CD8-positive, alpha-beta memory T cell (primary cell): ENCODE measurements at regions of chr5 and their contacts with region 1.

Region 1: GRCh38 chr5:132410451-132411381 is 41.2 kb downstream of the SLC22A5 start:
- DNase-seq: peak; percentile 78 to 91 (median 85)
- H3K4me3 ChIP-seq: peak overlapping the region; percentile 84
- H3K4me3 Mint-ChIP-seq: peak overlapping the region; percentile 91 to 99 (median 96)
- H3K27ac ChIP-seq: peak overlapping the region; percentile 93
- H3K27ac Mint-ChIP-seq: peak overlapping the region; percentile 96 to 99 (median 98)
- H3K4me1 ChIP-seq: peaks cover 74% of the 10 kb centered on the region
- H3K4me1 Mint-ChIP-seq: peaks cover 70 to 91% (median 75%) of the 10 kb centered on the region in 3 donors
- H3K27me3 ChIP-seq: no peaks in the 10 kb centered on the region
- H3K27me3 Mint-ChIP-seq: no peaks in the 10 kb centered on the region

Region 2: GRCh38 chr5:132386644-132387286 is 24.0 kb before region 1 on chr5:
- CTCF ChIA-PET with region 1: interaction called, 15 read pairs
- POLR2A ChIA-PET with region 1: interaction called, 5 read pairs
- DNase-seq: peak; percentile 60 to 86 (median 72)
- H3K4me3 ChIP-seq: no peak overlapping the region
- H3K4me3 Mint-ChIP-seq: peak overlapping the region in 1 of 7 donors; percentile 56
- H3K27ac ChIP-seq: no peak overlapping the region
- H3K27ac Mint-ChIP-seq: peak overlapping the region in 6 of 8 donors; percentile 7 to 85 (median 53)
- H3K4me1 ChIP-seq: peaks cover 19% of the 10 kb centered on the region
- H3K4me1 Mint-ChIP-seq: peaks cover 20 to 37% (median 23%) of the 10 kb centered on the region in 3 donors
- H3K27me3 ChIP-seq: no peaks in the 10 kb centered on the region
- H3K27me3 Mint-ChIP-seq: no peaks in the 10 kb centered on the region

Region 3: DNA sequence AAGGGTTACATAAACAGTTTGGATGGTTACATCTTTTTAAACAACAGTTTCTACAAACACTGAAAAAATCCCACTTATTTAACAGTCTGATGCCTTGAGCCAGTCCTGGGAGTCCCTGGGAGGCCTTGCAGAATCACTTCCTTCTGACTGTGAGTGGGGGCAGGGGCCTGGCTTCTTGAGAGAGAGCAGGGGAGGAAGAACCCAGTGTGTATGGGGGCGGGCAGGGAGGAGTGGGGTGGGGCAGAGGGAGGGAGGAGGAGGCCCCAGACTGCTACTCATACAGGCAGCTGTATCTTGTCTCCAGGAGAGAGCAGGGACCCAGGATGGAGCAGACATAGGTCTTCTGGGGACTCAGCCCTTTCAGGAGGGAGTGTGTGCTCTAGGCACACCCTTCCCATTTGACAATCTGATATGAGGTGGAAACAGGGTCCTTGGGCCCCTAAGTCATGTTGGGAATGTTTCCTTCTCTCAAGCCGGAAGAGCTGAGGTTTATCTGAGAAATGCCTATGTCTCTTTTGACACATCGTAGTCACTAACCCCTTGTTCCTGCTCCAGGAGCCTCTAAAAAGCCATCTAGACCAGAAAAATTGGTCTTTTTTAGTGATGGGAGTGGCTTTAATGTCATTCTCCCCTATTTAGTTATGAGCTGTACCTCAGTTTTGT is 27.0 kb after region 1 on chr5:
- CTCF ChIA-PET with region 1: interaction called, 13 read pairs
- POLR2A ChIA-PET with region 1: interaction called, 3 read pairs
- DNase-seq: peak; percentile 35 to 82 (median 48)
- H3K4me3 ChIP-seq: peak overlapping the region; percentile 55
- H3K4me3 Mint-ChIP-seq: peak overlapping the region; percentile 62 to 86 (median 74)
- H3K27ac ChIP-seq: peak overlapping the region; percentile 45
- H3K27ac Mint-ChIP-seq: peak overlapping the region; percentile 89 to 98 (median 94)
- H3K4me1 ChIP-seq: peaks cover 95% of the 10 kb centered on the region
- H3K4me1 Mint-ChIP-seq: peaks cover 88 to 99% (median 95%) of the 10 kb centered on the region in 3 donors
- H3K27me3 ChIP-seq: no peaks in the 10 kb centered on the region
- H3K27me3 Mint-ChIP-seq: no peaks in the 10 kb centered on the region

Region 4: DNA sequence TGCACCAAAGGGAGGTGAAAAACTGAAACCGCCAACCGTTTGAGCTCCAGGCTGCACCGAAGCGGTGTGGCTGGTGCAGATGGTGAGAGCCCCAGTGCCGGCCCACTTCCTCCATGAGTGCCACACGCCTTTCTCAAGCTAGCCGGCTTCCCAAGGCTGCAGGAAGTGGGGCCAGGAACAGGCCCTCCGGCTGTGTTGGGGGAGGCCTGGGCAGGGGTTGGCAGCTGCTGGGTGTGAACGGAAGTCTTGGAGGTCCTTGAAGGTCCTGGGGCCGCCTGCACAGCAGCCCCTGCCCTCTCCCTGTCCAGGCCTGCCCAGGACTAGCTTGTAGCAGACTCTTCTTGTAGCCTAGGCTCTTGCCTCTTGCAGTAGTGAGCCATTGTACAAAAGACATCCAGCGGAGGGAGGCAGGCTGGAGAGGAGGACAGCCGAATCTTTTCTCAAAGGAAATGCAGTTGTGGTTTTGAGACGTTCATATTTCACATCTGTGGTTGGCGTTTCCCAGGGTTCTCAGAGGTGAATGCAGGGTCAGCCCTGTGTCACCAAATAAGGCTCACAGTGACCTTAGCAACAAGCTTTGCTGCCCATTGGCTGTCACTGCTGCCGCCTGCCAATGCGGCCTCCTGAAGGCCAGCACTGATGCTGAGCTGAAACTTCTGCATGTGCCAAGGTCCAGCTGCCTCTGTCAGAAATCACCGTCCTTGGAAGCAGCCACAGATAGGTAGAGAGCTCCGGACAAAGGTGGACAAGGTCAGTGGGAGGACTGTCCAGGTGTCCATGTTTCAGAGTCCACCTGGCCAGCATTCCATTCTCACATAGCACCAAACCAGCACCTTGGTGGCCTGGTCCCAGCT is 55.9 kb after region 1 on chr5:
- CTCF ChIA-PET with region 1: interaction called, 28 read pairs
- POLR2A ChIA-PET with region 1: interaction called, 36 read pairs
- DNase-seq: peak; percentile 63 to 88 (median 78)
- H3K4me3 ChIP-seq: peak overlapping the region; percentile 57
- H3K4me3 Mint-ChIP-seq: peak overlapping the region; percentile 72 to 92 (median 82)
- H3K27ac ChIP-seq: peak overlapping the region; percentile 64
- H3K27ac Mint-ChIP-seq: peak overlapping the region; percentile 87 to 100 (median 98)
- H3K4me1 ChIP-seq: peaks cover 95% of the 10 kb centered on the region
- H3K4me1 Mint-ChIP-seq: peaks cover 98 to 100% (median 99%) of the 10 kb centered on the region in 3 donors
- H3K27me3 ChIP-seq: no peaks in the 10 kb centered on the region
- H3K27me3 Mint-ChIP-seq: no peaks in the 10 kb centered on the region

Region 5: DNA sequence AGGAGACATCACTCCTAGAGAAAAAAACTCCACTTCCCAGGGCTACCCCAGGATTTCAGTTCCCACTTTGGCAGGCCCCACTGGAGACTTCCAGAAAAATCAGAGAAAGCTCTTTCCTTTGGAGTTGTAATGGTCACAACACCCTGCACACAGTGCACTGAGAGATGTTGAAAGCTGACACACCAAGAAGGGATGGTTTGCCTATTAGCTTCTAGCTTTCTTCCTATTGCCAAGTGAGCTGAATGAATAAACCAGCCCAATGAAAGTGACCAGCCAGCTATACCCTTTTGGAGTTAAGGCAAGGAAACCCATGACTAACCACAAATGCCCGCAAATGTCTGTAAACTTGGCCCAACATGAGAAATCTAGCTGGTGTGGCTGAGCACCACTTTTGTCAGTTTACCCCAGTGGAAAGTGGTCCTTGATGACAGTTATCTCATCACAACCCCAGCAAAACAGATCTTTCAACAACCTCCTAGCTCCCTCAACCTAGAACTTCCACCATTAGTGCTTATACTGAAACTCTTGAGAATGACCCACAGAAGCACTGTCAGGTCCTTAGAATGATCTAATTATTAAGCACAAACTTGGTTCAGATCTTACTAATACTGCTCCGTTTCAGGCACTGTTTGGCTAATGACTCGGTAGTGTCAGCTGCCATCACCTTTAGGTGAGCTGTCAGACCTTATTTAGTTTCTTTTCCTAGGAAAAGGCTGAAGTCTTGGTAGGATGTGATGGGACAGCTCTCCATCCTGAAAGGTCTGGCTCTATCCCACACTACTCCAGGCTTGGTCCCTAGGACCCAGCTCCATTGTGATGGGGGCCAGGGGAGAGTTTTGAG is 68.6 kb after region 1 on chr5:
- CTCF ChIA-PET with region 1: interaction called, 22 read pairs
- POLR2A ChIA-PET with region 1: interaction called, 24 read pairs
- DNase-seq: peak in 2 of 5 donors; percentile 10 to 18
- H3K4me3 ChIP-seq: no peak overlapping the region
- H3K4me3 Mint-ChIP-seq: peak overlapping the region in 6 of 7 donors; percentile 6 to 58 (median 30)
- H3K27ac ChIP-seq: no peak overlapping the region
- H3K27ac Mint-ChIP-seq: peak overlapping the region; percentile 72 to 98 (median 94)
- H3K4me1 ChIP-seq: peaks cover 73% of the 10 kb centered on the region
- H3K4me1 Mint-ChIP-seq: peaks cover 79 to 94% (median 82%) of the 10 kb centered on the region in 3 donors
- H3K27me3 ChIP-seq: no peaks in the 10 kb centered on the region
- H3K27me3 Mint-ChIP-seq: peaks cover 0 to 9% of the 10 kb centered on the region in 2 donors

Region 6: DNA sequence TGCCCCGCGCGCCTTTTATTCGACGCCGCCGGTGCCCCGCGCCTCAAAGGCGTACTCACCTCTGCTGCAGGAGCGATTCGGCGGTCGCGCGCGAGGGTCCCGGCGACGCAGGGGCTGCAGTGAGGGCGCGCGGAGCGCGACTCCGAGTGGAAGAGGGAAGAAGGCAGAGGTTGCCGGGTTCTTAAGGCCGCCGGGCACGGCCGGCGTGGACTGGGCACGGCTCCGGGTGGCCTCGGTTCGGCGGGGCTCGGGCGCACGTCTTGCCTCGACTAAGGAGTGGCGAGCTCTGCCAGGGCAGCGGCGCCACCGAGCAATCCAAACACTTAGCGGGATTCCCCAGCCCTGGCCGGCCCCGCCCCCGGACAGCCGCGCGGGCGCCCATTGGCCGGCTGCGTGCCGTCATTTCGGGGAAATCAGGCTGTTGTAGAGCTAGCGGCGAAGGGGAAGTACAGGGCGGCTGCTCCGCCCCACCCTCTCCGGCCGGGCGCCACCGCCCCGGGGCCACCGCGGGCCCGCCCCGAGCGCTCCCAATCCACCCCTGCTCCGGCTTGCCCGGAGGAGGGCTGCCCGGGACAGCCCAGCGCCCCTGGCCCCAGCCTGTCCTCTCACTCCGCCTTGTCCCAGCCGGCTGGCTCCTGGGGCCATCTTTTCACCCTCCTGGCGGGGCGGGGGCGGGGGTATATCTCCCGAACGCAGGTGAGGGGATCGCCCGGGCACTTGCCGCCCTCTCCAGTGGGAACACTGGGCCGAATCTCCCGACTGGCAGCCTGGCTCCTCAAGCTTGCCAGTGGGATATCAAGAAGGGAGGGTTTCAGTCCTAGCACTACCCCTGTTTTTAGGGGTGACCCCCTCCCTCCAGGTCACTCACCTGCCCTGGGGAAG is 80.0 kb after region 1 on chr5 and contains the start of gene IRF1:
- CTCF ChIA-PET with region 1: interaction called, 78 read pairs
- POLR2A ChIA-PET with region 1: interaction called, 77 read pairs
- DNase-seq: peak; percentile 95 to 99 (median 98)
- H3K4me3 ChIP-seq: peak within 1 kb of the TSS; percentile 88
- H3K4me3 Mint-ChIP-seq: peak within 1 kb of the TSS; percentile 88 to 99 (median 96)
- H3K27ac ChIP-seq: peak within 1 kb of the TSS; percentile 96
- H3K27ac Mint-ChIP-seq: peak within 1 kb of the TSS; percentile 97 to 100 (median 98)
- H3K4me1 ChIP-seq: peaks cover 80% of the 10 kb centered on the region
- H3K4me1 Mint-ChIP-seq: peaks cover 69 to 80% (median 77%) of the 10 kb centered on the region in 3 donors
- H3K27me3 ChIP-seq: no peaks in the 10 kb centered on the region
- H3K27me3 Mint-ChIP-seq: peaks cover 0 to 13% of the 10 kb centered on the region in 2 donors
- total RNA-seq, gene IRF1: 115 to 121 TPM

Region 7: DNA sequence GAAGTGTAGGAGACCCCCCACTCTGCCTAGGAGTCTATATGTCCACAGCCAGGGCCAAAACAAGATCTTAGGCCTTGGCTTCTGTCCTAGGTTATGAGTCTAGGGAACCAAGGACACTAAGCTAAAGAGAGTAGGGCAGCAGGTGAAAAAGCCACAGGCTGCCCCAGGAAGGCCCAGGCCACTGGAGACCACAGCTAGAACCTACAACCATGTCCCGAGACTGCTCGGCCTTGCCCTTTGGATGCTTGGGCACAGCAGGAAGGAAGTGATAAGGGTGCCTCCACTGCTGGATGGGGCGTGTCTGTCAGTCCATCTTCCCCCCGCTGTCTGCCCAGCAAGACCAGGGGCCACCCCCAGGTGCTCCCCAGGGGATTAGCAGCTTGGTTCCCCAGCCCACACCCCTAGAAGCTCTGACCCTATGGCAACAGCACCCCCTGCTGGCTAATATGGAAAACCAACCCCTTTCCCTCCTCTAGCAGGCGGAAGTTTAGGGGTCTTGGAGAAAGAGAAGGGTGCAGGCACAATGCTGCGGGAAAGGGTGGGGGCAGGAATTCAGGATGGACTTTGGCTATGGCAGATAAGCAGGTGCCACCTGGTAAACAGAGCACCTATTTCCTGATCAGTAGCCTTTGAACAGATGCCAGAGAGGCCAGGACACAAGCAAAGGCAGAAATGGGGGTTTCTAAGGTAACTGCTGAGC is 90.4 kb after region 1 on chr5:
- CTCF ChIA-PET with region 1: interaction called, 15 read pairs
- POLR2A ChIA-PET with region 1: interaction called, 36 read pairs
- DNase-seq: peak; percentile 57 to 87 (median 73)
- H3K4me3 ChIP-seq: no peak overlapping the region
- H3K4me3 Mint-ChIP-seq: no peak overlapping the region
- H3K27ac ChIP-seq: no peak overlapping the region
- H3K27ac Mint-ChIP-seq: peak overlapping the region; percentile 41 to 100 (median 80)
- H3K4me1 ChIP-seq: peaks cover 34% of the 10 kb centered on the region
- H3K4me1 Mint-ChIP-seq: peaks cover 35 to 47% (median 38%) of the 10 kb centered on the region in 3 donors
- H3K27me3 ChIP-seq: peaks cover 3% of the 10 kb centered on the region
- H3K27me3 Mint-ChIP-seq: peaks cover 0 to 2% of the 10 kb centered on the region in 2 donors